ENCODE measurements at regions of chr11 and their contacts with region 1.

Region 1: DNA sequence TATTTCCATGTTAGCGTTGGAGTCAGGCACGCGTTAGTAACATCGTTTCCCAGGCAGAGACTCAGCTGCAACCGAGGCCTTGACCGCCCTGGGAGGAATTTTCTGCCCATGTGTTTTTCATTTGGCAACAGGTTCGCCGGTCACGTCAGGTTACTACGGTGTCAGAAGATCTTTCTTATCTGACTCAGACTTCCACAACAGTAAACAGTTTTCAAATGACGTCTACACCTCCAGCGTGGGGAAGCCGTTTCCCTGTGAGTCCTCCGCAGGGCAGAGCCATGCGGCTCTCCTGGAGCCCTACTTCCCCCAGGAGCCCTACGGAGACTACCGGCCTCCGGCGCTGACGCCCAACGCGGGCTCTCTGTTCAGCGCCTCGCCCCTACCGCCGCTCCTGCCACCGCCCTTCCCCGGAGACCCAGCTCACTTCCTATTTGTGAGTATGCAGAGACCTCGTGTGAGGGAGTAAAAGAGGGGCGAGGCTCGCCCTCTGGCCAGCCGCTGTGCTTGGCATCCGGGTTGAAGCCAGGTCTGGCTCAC is 14.3 kb upstream of the POU2AF3 start:
- ATAC-seq: peak in 2 of 8 experiments; percentile 3 to 39
- H3K4me3 ChIP-seq: no peak overlapping the region
- H3K27ac ChIP-seq: no peak overlapping the region
- H3K4me1 ChIP-seq: peaks cover 7 to 9% of the 10 kb centered on the region in 2 donors

Region 2: GRCh38 chr11:110858547-110858921 is 425.5 kb before region 1 on chr11:
- in situ Hi-C with region 1: no loop called
- ATAC-seq: peak in 4 of 8 experiments; percentile 52 to 75 (median 66)
- H3K4me3 ChIP-seq: no peak overlapping the region
- H3K27ac ChIP-seq: no peak overlapping the region
- H3K4me1 ChIP-seq: peaks cover 0 to 5% of the 10 kb centered on the region in 2 donors

Region 3: DNA sequence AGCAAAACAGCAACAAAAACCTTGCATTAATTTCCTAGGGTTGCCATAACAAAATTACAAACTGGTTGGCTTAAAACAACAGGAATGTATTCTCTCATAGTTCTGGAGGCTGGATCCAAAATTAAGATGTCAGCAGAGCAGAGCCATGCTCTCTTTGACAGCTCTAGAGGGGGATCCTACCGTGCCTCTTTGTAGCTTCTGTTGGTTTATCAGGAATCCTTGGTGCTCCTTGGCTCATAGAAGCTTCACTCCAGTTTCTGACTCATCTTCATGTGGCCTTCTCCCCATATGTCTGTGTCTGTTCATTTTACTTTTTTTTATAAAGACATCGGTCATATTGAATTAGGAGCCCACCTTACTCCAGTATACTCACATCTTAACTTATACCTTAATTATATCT is 129.0 kb before region 1 on chr11:
- in situ Hi-C with region 1: no loop called
- ATAC-seq: peak in 2 of 8 experiments; percentile 36 to 48
- H3K4me3 ChIP-seq: no peak overlapping the region
- H3K27ac ChIP-seq: no peak overlapping the region
- H3K4me1 ChIP-seq: no peaks in the 10 kb centered on the region

Region 4: GRCh38 chr11:111422494-111423249 is 138.7 kb after region 1 on chr11:
- in situ Hi-C with region 1: loop called in 6 of 9 experiments (anchors 5 to 25 kb)
- ATAC-seq: peak in 4 of 8 experiments; percentile 76 to 99 (median 92)
- H3K4me3 ChIP-seq: no peak overlapping the region
- H3K27ac ChIP-seq: no peak overlapping the region
- H3K4me1 ChIP-seq: no peaks in the 10 kb centered on the region

Region 5: DNA sequence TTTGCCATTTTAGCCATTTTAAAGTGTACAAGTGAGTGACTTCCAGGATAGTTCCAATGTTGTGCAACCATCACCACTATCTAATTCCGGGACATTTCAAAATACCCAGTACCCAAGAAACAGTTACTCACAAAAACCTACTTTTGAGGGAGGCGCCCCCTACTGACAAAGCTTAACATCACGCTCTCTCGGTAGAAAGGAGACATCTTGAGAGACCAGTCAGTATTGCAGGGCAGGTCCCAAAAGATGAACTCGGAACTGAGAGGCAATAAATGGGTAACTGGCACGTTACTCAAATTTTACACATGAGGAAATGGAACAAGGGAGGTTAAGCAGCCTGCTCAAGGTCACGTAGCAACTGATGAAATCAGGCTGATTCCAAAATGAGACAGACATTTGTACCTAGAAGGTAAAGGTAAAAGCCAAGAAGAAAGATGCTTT is 145.1 kb after region 1 on chr11:
- in situ Hi-C with region 1: loop called in 6 of 9 experiments (anchors 5 to 25 kb)
- ATAC-seq: peak in 3 of 8 experiments; percentile 54 to 86 (median 72)
- H3K4me3 ChIP-seq: no peak overlapping the region
- H3K27ac ChIP-seq: no peak overlapping the region
- H3K4me1 ChIP-seq: no peaks in the 10 kb centered on the region

Region 6: DNA sequence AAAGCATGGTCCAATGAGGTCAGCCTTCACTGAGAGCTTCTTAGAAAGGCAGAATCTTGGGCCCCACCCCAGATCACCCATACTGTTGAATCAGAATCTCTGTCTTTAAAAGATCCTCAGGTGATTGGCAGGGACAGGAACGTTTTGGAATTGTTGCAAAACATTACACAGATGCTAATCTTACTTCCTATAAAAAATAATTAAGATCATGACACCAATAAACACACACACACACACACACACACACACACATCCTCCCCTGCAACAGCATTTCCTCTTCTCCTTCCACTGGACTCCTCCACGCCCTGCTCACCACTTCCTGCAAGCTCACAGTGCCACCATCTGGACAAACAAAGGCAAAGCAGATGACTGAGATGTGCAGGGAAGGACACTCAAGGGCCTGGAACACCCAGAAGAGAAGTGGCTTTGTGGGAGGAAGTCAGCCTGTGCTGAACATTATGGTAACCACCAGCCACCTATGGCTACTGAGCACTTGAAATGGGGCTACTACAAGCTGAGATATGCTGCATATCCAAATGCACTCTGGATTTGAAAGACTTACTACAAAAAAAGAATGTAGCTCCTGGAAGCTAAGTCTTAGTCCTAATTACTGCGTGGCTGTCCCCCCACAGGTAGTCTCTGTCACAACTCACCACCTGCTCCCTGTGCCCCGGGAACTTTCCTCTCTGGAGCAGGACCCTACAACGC is 162.5 kb after region 1 on chr11:
- in situ Hi-C with region 1: loop called in 4 of 9 experiments (anchors 10 to 25 kb)
- ATAC-seq: peak; percentile 89 to 100 (median 100)
- H3K4me3 ChIP-seq: no peak overlapping the region
- H3K27ac ChIP-seq: no peak overlapping the region
- H3K4me1 ChIP-seq: no peaks in the 10 kb centered on the region

Region 7: DNA sequence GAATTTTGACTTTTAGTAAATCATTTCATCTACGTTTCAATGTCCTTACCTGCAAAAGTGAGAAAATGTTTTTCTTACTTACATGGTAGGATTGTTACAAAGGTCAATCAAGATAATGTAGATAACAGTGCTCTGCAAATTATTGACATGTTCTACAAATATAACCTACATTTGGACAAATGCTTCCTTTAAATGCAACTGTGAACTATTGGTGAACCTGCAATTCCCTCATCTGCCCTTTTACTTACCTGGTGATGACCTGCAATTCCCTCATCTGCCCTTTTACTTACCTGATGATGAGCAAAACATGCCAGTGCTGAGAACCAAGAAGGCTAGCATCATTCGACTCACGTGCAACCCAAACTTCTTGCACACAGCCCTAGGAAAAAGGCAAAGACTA is 576.2 kb after region 1 on chr11:
- in situ Hi-C with region 1: no loop called
- ATAC-seq: no peak
- H3K4me3 ChIP-seq: no peak overlapping the region
- H3K27ac ChIP-seq: no peak overlapping the region
- H3K4me1 ChIP-seq: no peaks in the 10 kb centered on the region

Measured in motor neuron (in vitro differentiated cells).